Posterior vena cava (tissue), 2 donors: ENCODE measurements at regions of chr4 and their contacts with region 1.

Region 1: DNA sequence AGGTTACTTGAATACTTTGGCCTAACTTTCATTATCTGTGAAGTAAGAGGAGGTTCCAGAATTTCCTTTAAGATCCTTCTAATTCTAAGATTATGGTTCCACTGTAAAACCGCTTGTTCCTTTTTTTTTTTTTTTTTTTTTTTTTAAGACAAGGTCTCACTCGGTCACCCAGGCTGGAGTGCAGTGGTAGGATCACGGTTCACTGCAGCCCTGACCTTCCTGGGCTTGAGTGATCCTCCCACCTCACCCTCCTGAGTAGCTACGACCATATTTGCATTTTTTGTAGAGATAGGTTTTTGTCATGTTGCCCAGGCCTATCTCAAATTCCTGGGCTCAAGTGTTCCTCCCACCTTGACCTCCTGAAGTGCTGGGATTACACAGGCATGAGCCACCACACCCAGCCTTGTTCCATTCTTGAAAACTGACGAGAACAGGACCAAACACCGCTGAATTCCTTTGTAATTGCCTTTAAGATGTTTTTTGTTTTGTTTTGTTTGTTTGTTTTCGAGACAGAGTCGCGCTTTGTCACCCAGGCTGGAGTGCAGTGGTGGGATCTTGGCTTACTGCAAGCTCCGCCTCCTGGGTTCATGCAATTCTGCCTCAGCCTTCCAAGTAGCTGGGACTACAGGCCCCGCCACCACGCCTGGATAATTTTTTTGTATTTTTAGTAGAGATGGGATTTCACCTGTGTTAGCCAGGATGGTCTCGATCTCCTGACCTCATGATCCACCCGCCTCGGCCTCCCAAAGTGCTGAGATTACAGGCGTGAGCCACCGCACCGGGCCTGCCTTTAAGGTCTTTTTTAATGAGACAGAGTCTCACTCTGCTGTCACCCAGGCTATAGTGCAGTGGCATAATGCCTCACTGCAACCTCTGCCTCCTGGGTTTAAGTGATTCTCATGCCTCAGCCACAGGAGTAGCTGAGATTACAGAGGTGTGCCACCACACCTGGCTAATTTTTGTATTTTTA is 6.8 kb downstream of the PDS5A start:
- DNase-seq: peak; percentile 55

Region 2: DNA sequence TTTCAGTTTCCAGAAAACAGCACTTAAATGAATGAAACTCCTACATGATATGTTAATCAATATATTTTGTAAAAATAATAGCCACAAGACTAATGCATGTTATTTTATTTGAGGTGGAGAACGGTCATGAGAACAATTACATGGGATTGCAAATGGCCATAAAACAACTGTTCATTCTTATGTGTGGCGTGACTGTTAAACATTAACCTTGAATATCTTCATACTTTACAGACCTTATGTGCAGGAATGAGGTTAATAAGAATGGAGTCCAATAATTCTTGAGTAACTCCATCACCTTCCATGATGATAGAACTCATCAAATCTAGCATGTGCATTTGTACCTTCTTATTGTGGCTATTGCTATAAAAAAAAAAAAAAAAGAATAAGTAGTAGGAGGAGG is 48.6 kb before region 1 on chr4:
- intact Hi-C with region 1: loop called in 1 of 2 experiments (anchors 5 kb)
- DNase-seq: no peak